ENCODE measurements at regions of chr7 and their contacts with region 1.

Region 1: DNA sequence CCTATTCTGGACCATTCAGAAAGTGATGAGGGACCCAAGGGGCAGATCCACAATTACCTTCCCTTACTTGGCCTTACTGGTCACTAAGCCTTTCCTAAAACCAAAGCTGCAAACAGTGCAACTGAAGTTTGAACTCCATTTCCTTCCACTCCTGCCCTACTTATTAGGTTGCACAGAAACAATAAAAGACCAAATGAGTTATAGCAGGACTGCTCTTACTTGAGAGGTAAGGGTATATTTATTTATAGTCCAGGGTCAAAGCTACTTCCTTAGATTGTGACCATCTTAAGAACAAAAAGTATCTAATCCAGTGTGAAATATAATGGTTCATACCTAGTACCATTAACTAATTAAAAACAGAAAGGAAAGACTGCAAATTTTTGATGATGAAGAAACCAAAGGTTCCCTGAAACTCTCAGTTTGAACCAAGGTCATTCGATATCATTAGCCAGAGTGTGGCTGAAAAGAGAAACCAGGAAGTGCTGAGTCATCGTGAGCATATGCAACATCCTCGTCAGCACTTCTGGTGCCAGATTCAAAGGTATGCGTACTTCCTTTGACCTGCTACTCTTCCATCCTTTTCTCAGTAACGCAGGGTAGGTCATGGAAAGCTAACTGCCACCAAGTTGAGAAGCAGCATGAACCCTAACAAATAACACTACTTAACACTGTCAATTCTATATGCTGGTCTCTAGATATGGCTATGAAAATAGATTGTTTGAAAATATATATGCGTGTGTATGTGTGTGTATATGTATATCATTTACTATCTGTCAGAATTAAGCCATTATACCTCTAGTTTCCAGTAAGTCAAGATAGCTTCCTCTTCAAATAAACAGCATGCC is 26.8 kb downstream of the CDK6 start:
- DNase-seq: peak in 7 of 9 donors; percentile 27 to 49 (median 41)
- ATAC-seq: peak; percentile 82
- H3K4me3 ChIP-seq: peak overlapping the region; percentile 11
- H3K4me3 Mint-ChIP-seq: peak overlapping the region in 9 of 10 donors; percentile 2 to 70 (median 41)
- H3K27ac ChIP-seq: no peak overlapping the region
- H3K27ac Mint-ChIP-seq: peak overlapping the region in 4 of 9 donors; percentile 27 to 92 (median 55)
- H3K4me1 ChIP-seq: peaks cover 18 to 30% of the 10 kb centered on the region in 2 donors
- H3K4me1 Mint-ChIP-seq: peaks cover 29 to 79% (median 42%) of the 10 kb centered on the region in 7 donors
- H3K27me3 ChIP-seq: no peaks in the 10 kb centered on the region
- H3K27me3 Mint-ChIP-seq: no peaks in the 10 kb centered on the region

Region 2: DNA sequence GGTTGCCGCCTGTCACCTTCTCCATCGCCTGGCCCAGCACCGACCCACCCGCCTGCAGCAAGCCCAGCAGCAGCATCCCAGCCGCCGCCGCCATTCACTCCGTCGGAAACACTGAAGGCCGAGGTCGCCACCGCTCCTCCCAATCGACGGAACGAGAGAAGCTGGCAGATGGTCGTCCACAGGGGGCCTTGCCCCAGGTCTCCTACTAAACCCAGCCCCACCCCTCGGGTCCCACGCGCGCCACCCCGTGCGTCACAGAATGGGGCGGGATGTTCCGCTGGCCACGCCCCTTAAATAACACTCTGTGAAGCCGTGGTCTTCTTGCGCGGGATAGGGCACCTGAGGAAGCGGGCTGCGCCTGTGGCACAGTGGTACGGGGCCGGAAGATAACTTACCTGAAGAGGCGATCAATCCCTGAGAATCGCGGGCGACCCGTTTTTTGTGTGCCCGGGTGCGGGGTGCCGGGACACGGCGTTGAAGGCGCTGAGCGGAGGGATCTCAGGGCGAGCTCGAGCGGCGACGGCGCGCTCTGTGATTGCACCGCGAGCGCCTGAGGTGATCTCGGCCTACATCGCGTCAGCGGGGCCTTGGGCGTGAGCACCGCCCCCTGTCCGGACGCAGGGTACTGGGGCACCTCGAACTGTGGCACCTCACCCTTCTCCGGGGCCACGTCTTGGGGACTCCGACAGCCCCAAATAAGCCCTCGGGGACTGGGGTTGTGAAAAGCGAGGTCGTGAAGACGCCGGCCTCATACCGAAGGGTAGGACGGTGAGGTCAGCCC is 675.2 kb before region 1 on chr7 and contains the start of gene CYP51A1:
- CTCF ChIA-PET with region 1: no interaction called
- POLR2A ChIA-PET with region 1: no interaction called
- intact Hi-C with region 1: no loop called
- DNase-seq: peak; percentile 93 to 98 (median 96)
- ATAC-seq: peak; percentile 93
- H3K4me3 ChIP-seq: peak within 1 kb of the TSS; percentile 92
- H3K4me3 Mint-ChIP-seq: peak within 1 kb of the TSS; percentile 95 to 100 (median 98)
- H3K27ac ChIP-seq: peak within 1 kb of the TSS; percentile 94
- H3K27ac Mint-ChIP-seq: peak within 1 kb of the TSS; percentile 89 to 100 (median 99)
- H3K4me1 ChIP-seq: peaks cover 4 to 12% of the 10 kb centered on the region in 2 donors
- H3K4me1 Mint-ChIP-seq: peaks cover 12 to 49% (median 40%) of the 10 kb centered on the region in 7 donors
- H3K27me3 ChIP-seq: no peaks in the 10 kb centered on the region
- H3K27me3 Mint-ChIP-seq: peaks cover 0 to 2% (median 0%) of the 10 kb centered on the region in 5 donors
- total RNA-seq, gene CYP51A1: 14.7 to 36.6 (median 21.7) TPM

Region 3: DNA sequence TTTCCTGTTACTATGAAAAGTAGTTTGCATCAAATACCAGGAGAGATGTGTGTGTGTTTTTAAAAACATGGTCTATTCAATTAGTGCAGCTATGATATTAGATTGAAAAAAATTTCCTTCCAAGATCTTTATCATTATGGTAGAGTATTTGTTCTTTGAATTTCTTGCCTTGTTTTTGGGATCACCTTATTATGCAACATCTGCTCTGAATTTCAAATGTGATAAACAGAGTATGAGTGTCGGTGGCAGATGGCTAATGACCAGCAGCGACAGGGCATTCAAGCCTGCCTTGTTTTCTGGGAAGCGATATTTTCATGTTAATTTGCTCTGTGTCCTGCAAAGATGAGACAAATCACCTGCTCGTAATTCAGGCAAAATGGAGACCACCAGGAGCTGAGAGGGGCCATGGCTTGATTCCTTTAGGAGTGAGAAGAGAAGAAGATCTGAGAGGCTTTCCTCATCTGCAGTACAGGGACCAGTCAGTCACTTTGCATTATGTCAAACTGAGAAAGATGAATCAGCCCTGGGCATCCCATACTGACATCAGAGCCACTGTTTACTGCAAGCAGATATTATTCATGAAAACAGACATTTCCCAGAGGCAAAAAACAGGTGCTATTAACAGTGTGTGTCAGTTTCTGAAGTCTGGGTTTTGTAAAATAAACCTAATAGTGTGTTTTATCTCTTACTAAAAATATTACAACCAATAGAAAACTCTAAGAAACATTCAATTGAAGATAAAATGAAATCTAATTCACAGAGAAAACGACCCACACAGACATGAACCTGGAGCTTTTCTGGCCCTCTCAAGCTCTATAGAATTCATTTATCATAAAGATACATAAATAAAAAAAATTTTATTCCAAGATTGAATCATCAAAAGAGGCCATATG is 40.9 kb before region 1 on chr7:
- CTCF ChIA-PET with region 1: no interaction called
- POLR2A ChIA-PET with region 1: no interaction called
- intact Hi-C with region 1: loop called (anchors 5 to 10 kb)
- DNase-seq: peak in 1 of 9 donors; percentile 29
- ATAC-seq: no peak
- H3K4me3 ChIP-seq: no peak overlapping the region
- H3K4me3 Mint-ChIP-seq: peak overlapping the region in 1 of 10 donors; percentile 45
- H3K27ac ChIP-seq: no peak overlapping the region
- H3K27ac Mint-ChIP-seq: peak overlapping the region in 4 of 9 donors; percentile 26 to 69 (median 39)
- H3K4me1 ChIP-seq: no peaks in the 10 kb centered on the region
- H3K4me1 Mint-ChIP-seq: peaks cover 24 to 59% (median 32%) of the 10 kb centered on the region in 7 donors
- H3K27me3 ChIP-seq: no peaks in the 10 kb centered on the region
- H3K27me3 Mint-ChIP-seq: no peaks in the 10 kb centered on the region

Region 4: DNA sequence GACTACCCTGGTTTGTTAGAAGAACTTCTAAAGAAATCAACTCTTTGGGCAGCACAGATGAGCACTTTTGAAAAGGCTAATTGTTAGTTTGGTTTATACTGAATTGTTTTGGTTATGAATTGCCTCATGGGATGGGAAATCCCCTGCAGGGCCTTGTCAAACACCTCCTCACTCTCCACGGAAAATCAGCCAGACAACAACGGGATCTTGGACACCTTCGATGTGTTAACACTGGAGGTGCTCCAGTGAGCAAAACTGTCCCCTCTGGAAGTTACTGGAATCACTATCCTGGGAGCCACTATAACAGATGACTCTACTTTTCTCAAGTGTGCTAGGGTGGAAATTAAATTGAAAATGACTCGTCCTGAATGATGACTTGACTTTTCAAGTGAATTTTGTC is 11.9 kb before region 1 on chr7:
- CTCF ChIA-PET with region 1: no interaction called
- POLR2A ChIA-PET with region 1: interaction called, 3 read pairs
- intact Hi-C with region 1: loop called (anchors 1 to 2 kb)
- DNase-seq: peak in 1 of 9 donors; percentile 50
- ATAC-seq: no peak
- H3K4me3 ChIP-seq: no peak overlapping the region
- H3K4me3 Mint-ChIP-seq: no peak overlapping the region
- H3K27ac ChIP-seq: no peak overlapping the region
- H3K27ac Mint-ChIP-seq: no peak overlapping the region
- H3K4me1 ChIP-seq: peaks cover 0 to 3% of the 10 kb centered on the region in 2 donors
- H3K4me1 Mint-ChIP-seq: peaks cover 0 to 38% (median 19%) of the 10 kb centered on the region in 7 donors
- H3K27me3 ChIP-seq: no peaks in the 10 kb centered on the region
- H3K27me3 Mint-ChIP-seq: no peaks in the 10 kb centered on the region

Region 5: DNA sequence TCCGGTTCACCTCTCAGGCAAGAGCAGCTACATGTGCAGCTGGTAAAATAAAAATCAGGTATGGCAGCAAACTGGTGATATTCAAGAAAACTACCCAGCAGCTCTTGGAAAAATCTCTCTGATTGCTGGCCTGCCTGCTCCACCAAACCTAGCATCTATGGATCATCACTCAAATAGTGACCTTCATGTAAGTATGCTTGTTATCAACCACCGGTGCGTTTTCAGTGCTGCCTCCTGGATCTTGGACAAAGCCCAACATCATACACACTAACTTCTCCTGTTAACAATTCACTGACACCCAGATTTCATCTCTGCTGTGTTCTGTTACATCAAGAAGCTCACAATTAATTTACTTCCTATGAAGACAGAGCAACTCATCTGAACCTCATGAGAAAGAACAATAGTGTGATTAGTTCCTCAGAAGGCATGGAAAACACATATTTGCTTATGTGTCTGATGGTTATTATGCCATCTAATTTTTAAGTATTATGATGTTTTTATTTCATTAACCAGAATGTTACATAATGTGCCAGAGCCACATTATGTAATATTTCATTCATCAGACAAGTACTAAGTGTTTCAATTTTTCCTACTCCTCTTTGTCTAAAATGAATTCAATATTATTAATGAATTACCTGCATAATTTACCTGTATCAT is 18.0 kb after region 1 on chr7:
- CTCF ChIA-PET with region 1: interaction called, 5 read pairs
- POLR2A ChIA-PET with region 1: interaction called, 4 read pairs
- intact Hi-C with region 1: loop called (anchors 1 kb)
- DNase-seq: no peak
- ATAC-seq: no peak
- H3K4me3 ChIP-seq: no peak overlapping the region
- H3K4me3 Mint-ChIP-seq: peak overlapping the region in 6 of 10 donors; percentile 27 to 63 (median 46)
- H3K27ac ChIP-seq: no peak overlapping the region
- H3K27ac Mint-ChIP-seq: peak overlapping the region in 3 of 9 donors; percentile 29 to 65 (median 34)
- H3K4me1 ChIP-seq: peaks cover 34 to 42% of the 10 kb centered on the region in 2 donors
- H3K4me1 Mint-ChIP-seq: peaks cover 40 to 86% (median 77%) of the 10 kb centered on the region in 7 donors
- H3K27me3 ChIP-seq: no peaks in the 10 kb centered on the region
- H3K27me3 Mint-ChIP-seq: no peaks in the 10 kb centered on the region